ENCODE measurements at regions of chr7 and their contacts with region 1.

Region 1: DNA sequence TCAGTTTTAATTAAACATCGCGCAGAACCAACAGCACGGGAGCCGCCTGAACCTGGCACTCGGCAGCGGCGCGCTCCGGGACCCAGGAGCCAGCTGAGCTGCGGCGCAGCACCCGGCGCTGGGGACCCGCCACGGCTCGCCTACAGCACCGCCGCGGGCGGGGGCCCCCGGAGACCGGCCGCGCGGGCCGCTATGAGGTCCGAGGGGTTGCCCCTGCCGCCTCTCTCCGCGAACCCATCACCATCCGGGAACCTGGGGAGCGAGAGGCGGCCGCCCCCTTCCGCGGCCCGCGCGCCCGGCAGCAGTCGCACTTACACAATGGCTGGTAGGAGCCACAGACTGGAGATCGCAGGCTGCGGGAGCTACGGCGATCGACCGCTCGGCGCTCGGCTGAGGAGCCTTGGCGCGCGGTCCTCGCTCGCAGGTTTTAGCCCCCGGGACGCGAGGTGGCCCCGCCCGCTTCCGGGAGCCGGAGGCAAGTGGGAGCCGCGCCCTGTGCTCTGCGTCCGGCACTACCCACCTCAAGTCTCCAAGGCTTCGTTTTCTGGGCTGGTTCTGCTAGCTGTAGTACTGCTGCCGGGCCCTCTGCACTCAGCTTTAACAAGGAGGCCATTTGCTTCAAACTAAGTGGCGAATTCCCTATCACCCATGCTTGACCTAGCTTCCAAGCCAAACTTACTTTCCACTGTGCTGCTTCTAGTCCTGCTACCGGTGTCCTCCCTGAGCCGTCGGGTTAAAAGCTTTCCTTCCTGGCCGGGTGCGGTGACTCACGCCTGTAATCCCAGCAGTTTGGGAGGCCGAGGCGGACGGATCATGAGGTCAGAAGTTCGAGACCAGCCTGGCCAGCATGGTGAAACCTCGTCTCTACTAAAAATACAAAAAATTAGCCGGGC is at the start of gene TPK1:
- DNase-seq: peak; percentile 81 to 97 (median 89)
- ATAC-seq: peak; percentile 84
- H3K4me3 ChIP-seq: peak within 1 kb of the TSS; percentile 67 to 87
- H3K4me3 Mint-ChIP-seq: peak within 1 kb of the TSS; percentile 98
- H3K27ac ChIP-seq: peak within 1 kb of the TSS; percentile 84 to 87
- H3K27ac Mint-ChIP-seq: peak within 1 kb of the TSS; percentile 99
- H3K4me1 ChIP-seq: peaks cover 39% of the 10 kb centered on the region
- H3K4me1 Mint-ChIP-seq: peaks cover 36% of the 10 kb centered on the region
- H3K27me3 ChIP-seq: no peaks in the 10 kb centered on the region
- H3K27me3 Mint-ChIP-seq: no peaks in the 10 kb centered on the region
- CTCF ChIP-seq: no peak
- total RNA-seq, gene TPK1: 14.7 to 15.1 TPM

Region 2: GRCh38 chr7:144738708-144739314 is 97.1 kb before region 1 on chr7:
- CTCF ChIA-PET with region 1: interaction called, 17 read pairs
- POLR2A ChIA-PET with region 1: interaction called, 8 read pairs
- intact Hi-C with region 1: loop called in 1 of 2 experiments (anchors 1 kb)
- DNase-seq: peak in 4 of 9 experiments; percentile 13 to 63 (median 34)
- ATAC-seq: peak; percentile 58
- H3K4me3 ChIP-seq: no peak overlapping the region
- H3K4me3 Mint-ChIP-seq: no peak overlapping the region
- H3K27ac ChIP-seq: no peak overlapping the region
- H3K27ac Mint-ChIP-seq: no peak overlapping the region
- H3K4me1 ChIP-seq: no peaks in the 10 kb centered on the region
- H3K4me1 Mint-ChIP-seq: peaks cover 9% of the 10 kb centered on the region
- H3K27me3 ChIP-seq: no peaks in the 10 kb centered on the region
- H3K27me3 Mint-ChIP-seq: no peaks in the 10 kb centered on the region
- CTCF ChIP-seq: peak; percentile 94

Region 3: GRCh38 chr7:144796919-144797318 is 39.0 kb before region 1 on chr7:
- CTCF ChIA-PET with region 1: interaction called, 7 read pairs
- POLR2A ChIA-PET with region 1: interaction called, 11 read pairs
- intact Hi-C with region 1: loop called in 1 of 2 experiments (anchors 5 kb)
- DNase-seq: no peak
- ATAC-seq: no peak
- H3K4me3 ChIP-seq: no peak overlapping the region
- H3K4me3 Mint-ChIP-seq: no peak overlapping the region
- H3K27ac ChIP-seq: no peak overlapping the region
- H3K27ac Mint-ChIP-seq: no peak overlapping the region
- H3K4me1 ChIP-seq: no peaks in the 10 kb centered on the region
- H3K4me1 Mint-ChIP-seq: peaks cover 35% of the 10 kb centered on the region
- H3K27me3 ChIP-seq: no peaks in the 10 kb centered on the region
- H3K27me3 Mint-ChIP-seq: no peaks in the 10 kb centered on the region
- CTCF ChIP-seq: no peak

Region 4: GRCh38 chr7:144812379-144813283 is 23.3 kb before region 1 on chr7:
- CTCF ChIA-PET with region 1: interaction called, 33 read pairs
- POLR2A ChIA-PET with region 1: interaction called, 144 read pairs
- intact Hi-C with region 1: loop called in 1 of 2 experiments (anchors 2 kb)
- DNase-seq: peak in 8 of 9 experiments; percentile 26 to 82 (median 51)
- ATAC-seq: peak; percentile 97
- H3K4me3 ChIP-seq: peak overlapping the region in 1 of 2 experiments; percentile 25
- H3K4me3 Mint-ChIP-seq: peak overlapping the region; percentile 74
- H3K27ac ChIP-seq: peak overlapping the region; percentile 31 to 67
- H3K27ac Mint-ChIP-seq: peak overlapping the region; percentile 92
- H3K4me1 ChIP-seq: peaks cover 49% of the 10 kb centered on the region
- H3K4me1 Mint-ChIP-seq: peaks cover 69% of the 10 kb centered on the region
- H3K27me3 ChIP-seq: no peaks in the 10 kb centered on the region
- H3K27me3 Mint-ChIP-seq: no peaks in the 10 kb centered on the region
- CTCF ChIP-seq: no peak

Region 5: GRCh38 chr7:144854839-144855424 is 19.0 kb after region 1 on chr7:
- CTCF ChIA-PET with region 1: interaction called, 7 read pairs
- POLR2A ChIA-PET with region 1: interaction called, 8 read pairs
- intact Hi-C with region 1: loop called in 1 of 2 experiments (anchors 2 kb)
- DNase-seq: peak in 1 of 9 experiments; percentile 32
- ATAC-seq: no peak
- H3K4me3 ChIP-seq: no peak overlapping the region
- H3K4me3 Mint-ChIP-seq: no peak overlapping the region
- H3K27ac ChIP-seq: no peak overlapping the region
- H3K27ac Mint-ChIP-seq: no peak overlapping the region
- H3K4me1 ChIP-seq: no peaks in the 10 kb centered on the region
- H3K4me1 Mint-ChIP-seq: no peaks in the 10 kb centered on the region
- H3K27me3 ChIP-seq: no peaks in the 10 kb centered on the region
- H3K27me3 Mint-ChIP-seq: no peaks in the 10 kb centered on the region
- CTCF ChIP-seq: no peak

Measured in CD8-positive, alpha-beta T cell (primary cell).